ENCODE measurements at regions of chr3 and their contacts with region 1.

Region 1: DNA sequence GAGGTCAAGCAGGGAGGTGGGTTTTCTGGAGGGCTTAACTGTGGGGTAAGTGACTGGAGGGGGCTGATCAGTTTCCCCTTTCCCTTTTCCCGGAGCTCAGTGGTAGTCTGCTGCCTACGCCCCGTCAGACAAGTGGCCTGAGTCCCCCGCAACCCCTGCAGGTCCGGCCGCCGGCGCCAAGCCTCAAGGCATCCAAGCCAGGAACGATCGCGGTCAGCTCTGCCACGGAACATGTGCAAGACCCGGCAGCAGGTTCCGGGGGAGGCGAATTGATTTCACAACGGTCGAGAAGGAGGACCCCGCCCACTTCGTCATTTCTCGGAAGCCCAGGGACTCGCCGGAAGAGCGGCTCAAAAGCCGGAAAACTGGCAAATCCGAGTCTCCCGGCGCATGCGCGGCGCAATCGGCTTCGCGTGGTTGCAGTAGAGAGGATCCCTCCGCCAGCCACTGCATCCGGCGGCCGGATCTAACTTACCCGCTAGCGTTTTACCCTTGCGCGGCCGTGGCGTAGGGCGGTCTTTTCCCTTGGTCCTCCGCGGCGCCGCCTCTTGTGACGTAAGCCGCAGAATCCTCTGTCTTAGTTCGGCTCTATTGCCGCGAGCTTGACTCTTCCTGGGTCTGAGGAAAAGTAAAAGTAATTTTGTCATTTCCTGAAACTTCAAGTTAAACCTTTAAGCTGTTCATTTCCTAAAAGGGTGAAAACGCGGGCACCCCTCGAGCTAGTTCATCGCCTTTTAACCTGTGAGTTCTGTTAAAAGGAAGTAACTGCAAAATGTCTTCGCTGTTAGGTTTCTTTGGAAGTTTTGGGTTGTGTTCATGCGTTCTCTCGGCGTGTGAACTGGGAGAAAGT is 14.9 kb upstream of the CCNL1 start:
- DNase-seq: peak; percentile 97 to 99 (median 98)
- H3K4me3 ChIP-seq: peak overlapping the region; percentile 87
- H3K4me3 Mint-ChIP-seq: peak overlapping the region; percentile 91 to 96 (median 95)
- H3K27ac ChIP-seq: peak overlapping the region; percentile 98
- H3K27ac Mint-ChIP-seq: peak overlapping the region; percentile 96 to 100 (median 98)
- H3K4me1 ChIP-seq: peaks cover 25% of the 10 kb centered on the region
- H3K4me1 Mint-ChIP-seq: peaks cover 30 to 44% (median 39%) of the 10 kb centered on the region in 3 donors
- H3K27me3 ChIP-seq: no peaks in the 10 kb centered on the region
- H3K27me3 Mint-ChIP-seq: peaks cover 3 to 5% of the 10 kb centered on the region in 2 donors

Region 2: DNA sequence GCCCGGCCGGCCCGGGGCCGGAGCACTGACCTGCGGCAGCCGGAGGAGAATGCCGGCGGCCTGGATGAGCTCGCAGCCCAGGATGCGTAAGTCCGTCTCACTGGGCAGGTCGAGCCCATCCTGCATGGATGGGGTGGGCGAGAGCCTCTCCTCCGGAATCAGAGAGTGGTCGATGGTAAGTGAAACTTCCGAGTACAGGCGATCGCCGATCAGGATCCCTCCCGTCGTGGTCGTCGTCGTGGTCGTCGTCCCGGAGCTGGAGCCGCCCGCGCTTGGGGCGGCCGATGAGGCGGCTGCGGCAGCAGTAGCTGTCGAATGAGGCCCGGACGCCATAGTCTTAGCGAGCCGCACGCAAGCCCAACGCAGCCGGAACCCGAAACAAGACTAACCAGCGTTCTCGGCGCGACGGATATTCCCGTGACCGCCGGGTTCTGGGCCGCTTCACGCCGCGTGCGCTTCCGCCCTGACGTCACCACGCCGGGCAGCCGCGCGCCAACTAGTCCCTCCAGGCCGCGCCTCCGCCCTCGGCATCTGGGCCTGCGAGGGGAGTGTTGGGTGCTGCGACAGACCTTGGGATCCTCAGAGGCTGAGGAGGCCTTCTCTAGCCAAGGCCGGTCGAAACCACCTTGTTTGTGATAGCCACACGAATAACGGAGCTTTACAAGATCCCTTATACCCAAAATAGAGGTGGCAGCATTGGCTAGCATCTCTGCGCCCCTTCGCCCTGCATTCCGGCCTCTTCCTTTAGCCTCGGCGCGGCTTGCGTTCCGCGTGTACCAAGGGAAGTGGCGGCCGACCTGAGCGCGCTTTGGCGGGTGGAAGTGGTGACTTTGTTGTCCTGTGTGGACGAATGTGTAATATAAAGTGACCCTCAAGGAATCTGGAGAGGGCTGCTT is 14.9 kb before region 1 on chr3 and contains the start of gene CCNL1:
- CTCF ChIA-PET with region 1: interaction called, 54 read pairs
- POLR2A ChIA-PET with region 1: interaction called, 284 read pairs
- DNase-seq: peak; percentile 92 to 97 (median 96)
- H3K4me3 ChIP-seq: peak within 1 kb of the TSS; percentile 96
- H3K4me3 Mint-ChIP-seq: peak within 1 kb of the TSS; percentile 90 to 99 (median 93)
- H3K27ac ChIP-seq: peak within 1 kb of the TSS; percentile 100
- H3K27ac Mint-ChIP-seq: peak within 1 kb of the TSS; percentile 96 to 100 (median 100)
- H3K4me1 ChIP-seq: peaks cover 46% of the 10 kb centered on the region
- H3K4me1 Mint-ChIP-seq: peaks cover 53 to 63% (median 54%) of the 10 kb centered on the region in 3 donors
- H3K27me3 ChIP-seq: no peaks in the 10 kb centered on the region
- H3K27me3 Mint-ChIP-seq: peaks cover 0 to 5% of the 10 kb centered on the region in 2 donors
- total RNA-seq, gene CCNL1: 125 to 126 TPM

Region 3: DNA sequence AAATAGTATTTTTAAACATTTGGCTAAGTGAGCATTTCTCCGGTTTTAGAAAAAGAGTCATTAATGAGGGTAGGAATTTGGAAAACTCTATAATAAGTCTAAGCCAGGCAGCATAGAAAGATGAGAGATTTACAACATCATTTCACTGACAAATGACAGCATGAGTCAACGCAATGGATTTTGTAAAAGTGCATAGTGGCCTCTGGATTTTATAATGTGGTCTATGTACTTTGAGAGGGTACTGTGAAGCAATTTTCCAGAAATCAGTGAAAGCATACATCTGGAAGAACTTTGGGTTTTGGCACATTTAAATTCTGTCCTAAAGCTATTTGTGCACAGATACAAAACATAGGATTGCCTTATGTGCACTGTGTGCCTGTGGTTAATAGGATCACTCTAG is 115.9 kb after region 1 on chr3:
- CTCF ChIA-PET with region 1: no interaction called
- POLR2A ChIA-PET with region 1: no interaction called
- DNase-seq: no peak
- H3K4me3 ChIP-seq: no peak overlapping the region
- H3K4me3 Mint-ChIP-seq: no peak overlapping the region
- H3K27ac ChIP-seq: no peak overlapping the region
- H3K27ac Mint-ChIP-seq: no peak overlapping the region
- H3K4me1 ChIP-seq: no peaks in the 10 kb centered on the region
- H3K4me1 Mint-ChIP-seq: no peaks in the 10 kb centered on the region
- H3K27me3 ChIP-seq: no peaks in the 10 kb centered on the region
- H3K27me3 Mint-ChIP-seq: peaks cover 0 to 1% of the 10 kb centered on the region in 2 donors

Measured in CD8-positive, alpha-beta memory T cell (primary cell).